ENCODE measurements at regions of chr14 and their contacts with region 1.

Region 1: GRCh38 chr14:93911975-93912615 is 15.0 kb upstream of the FAM181A start:
- DNase-seq: no peak
- H3K4me3 ChIP-seq: no peak overlapping the region
- H3K27ac ChIP-seq: no peak overlapping the region
- H3K4me1 ChIP-seq: no peaks in the 10 kb centered on the region
- H3K27me3 ChIP-seq: no peaks in the 10 kb centered on the region
- CTCF ChIP-seq: no peak

Region 2: GRCh38 chr14:93880021-93880820 is 31.9 kb before region 1 on chr14:
- CTCF ChIA-PET with region 1: interaction called, 11 read pairs
- dilution Hi-C with region 1: no loop called
- in situ Hi-C with region 1: no loop called
- intact Hi-C with region 1: no loop called
- DNase-seq: no peak
- H3K4me3 ChIP-seq: peak overlapping the region in 1 of 3 experiments; percentile 8
- H3K27ac ChIP-seq: no peak overlapping the region
- H3K4me1 ChIP-seq: no peaks in the 10 kb centered on the region
- H3K27me3 ChIP-seq: no peaks in the 10 kb centered on the region
- CTCF ChIP-seq: no peak

Region 3: DNA sequence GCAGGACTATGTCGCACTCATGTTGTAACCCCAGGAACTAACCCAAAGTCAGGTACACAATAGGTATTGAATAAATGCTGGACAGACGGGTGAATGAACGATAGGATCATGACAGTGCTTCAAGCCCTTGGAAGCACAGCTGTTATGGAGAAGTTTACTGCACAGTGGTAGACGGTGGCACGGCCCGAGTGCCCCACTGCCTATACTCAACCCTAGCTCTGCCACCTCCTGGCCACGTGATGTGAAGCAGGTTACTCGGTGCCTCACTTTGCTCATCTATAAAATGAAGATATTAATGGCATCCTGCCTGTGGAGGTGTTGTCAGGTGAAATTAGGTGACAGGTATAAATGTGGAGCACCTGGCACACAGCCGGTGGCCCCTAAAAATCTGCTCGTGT is 58.5 kb after region 1 on chr14:
- CTCF ChIA-PET with region 1: no interaction called
- dilution Hi-C with region 1: no loop called
- in situ Hi-C with region 1: no loop called
- intact Hi-C with region 1: no loop called
- DNase-seq: peak; percentile 42
- H3K4me3 ChIP-seq: no peak overlapping the region
- H3K27ac ChIP-seq: no peak overlapping the region
- H3K4me1 ChIP-seq: peaks cover 11% of the 10 kb centered on the region
- H3K27me3 ChIP-seq: no peaks in the 10 kb centered on the region
- CTCF ChIP-seq: peak; percentile 39 to 58

Measured in mammary epithelial cell (primary cell).